Head of caudate nucleus (tissue), 42 donors: ENCODE measurements at regions of chr2 and their contacts with region 1.

Region 1: GRCh38 chr2:10072656-10073480 is 7.3 kb downstream of the CYS1 start:
- DNase-seq: peak; percentile 60 to 93 (median 84)

Region 2: GRCh38 chr2:10434886-10435819 is 362.3 kb after region 1 on chr2:
- intact Hi-C with region 1: loop called (anchors 5 kb)
- DNase-seq: peak; percentile 43 to 89 (median 76)